PC-9 (cell line): ENCODE measurements at regions of chr2 and their contacts with region 1.

Region 1: DNA sequence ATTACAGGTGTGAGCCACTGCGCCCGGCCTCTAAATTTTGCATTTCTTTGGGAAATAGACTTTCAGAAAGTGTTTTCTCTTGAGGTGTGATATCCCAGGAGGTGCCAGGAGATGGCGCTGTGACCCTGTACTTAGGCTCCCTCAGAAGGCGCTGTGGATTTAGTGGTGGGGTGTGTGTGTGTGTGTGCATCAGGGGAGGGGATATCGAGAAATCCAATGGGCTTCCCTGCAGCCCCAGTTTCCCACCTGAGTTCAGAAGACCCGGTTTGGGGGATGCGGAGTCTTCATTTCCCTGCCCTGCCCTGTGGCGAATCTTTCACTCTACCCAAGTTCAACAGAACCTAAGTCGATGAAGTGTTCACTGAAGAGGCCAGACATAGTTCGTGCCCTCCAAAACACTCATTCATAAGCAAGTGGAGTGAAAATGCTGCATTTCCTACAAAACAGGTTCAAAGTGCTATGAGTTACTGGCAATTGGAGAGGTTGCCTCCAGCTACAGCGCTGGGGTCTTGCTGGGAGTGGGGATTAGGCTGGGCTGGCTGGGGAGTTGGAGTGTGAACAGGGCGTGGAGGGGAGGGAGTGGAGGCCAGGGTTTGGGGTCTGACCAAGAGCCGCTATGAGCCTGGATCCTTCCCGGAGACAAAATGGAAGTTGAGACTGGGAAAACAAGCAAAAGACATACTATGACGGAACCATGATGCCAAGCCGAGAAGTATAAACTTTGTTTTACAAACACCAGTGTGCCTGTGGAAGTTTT is 6.5 kb upstream of the WNT6 start:
- DNase-seq: peak in 1 of 2 experiments; percentile 37
- H3K4me3 ChIP-seq: no peak overlapping the region
- H3K27ac ChIP-seq: no peak overlapping the region
- H3K4me1 ChIP-seq: peaks cover 60% of the 10 kb centered on the region
- H3K27me3 ChIP-seq: no peaks in the 10 kb centered on the region
- CTCF ChIP-seq: peak; percentile 78

Region 2: GRCh38 chr2:218260742-218261437 is 592.2 kb before region 1 on chr2 and contains the start of gene GPBAR1:
- CTCF ChIA-PET with region 1: no interaction called
- POLR2A ChIA-PET with region 1: no interaction called
- intact Hi-C with region 1: no loop called
- DNase-seq: no peak
- H3K4me3 ChIP-seq: no peak within 1 kb of the TSS
- H3K27ac ChIP-seq: no peak within 1 kb of the TSS
- H3K4me1 ChIP-seq: no peaks in the 10 kb centered on the region
- H3K27me3 ChIP-seq: no peaks in the 10 kb centered on the region
- CTCF ChIP-seq: no peak
- total RNA-seq, gene GPBAR1: 0.20 and 0.22 TPM in 2 replicates

Region 3: GRCh38 chr2:218395797-218396687 is 457.0 kb before region 1 on chr2:
- CTCF ChIA-PET with region 1: no interaction called
- POLR2A ChIA-PET with region 1: no interaction called
- intact Hi-C with region 1: loop called (anchors 5 kb)
- DNase-seq: peak; percentile 83 to 95
- H3K4me3 ChIP-seq: peak overlapping the region; percentile 89
- H3K27ac ChIP-seq: peak overlapping the region; percentile 79
- H3K4me1 ChIP-seq: peaks cover 20% of the 10 kb centered on the region
- H3K27me3 ChIP-seq: no peaks in the 10 kb centered on the region
- CTCF ChIP-seq: peak; percentile 86

Region 4: GRCh38 chr2:218659258-218659987 is 193.7 kb before region 1 on chr2 and contains the starts of genes BCS1L and ZNF142:
- CTCF ChIA-PET with region 1: interaction called, 12 read pairs
- POLR2A ChIA-PET with region 1: no interaction called
- intact Hi-C with region 1: no loop called
- DNase-seq: peak; percentile 81 to 89
- H3K4me3 ChIP-seq: peak within 1 kb of the TSS; percentile 75
- H3K27ac ChIP-seq: peak within 1 kb of the TSS; percentile 42
- H3K4me1 ChIP-seq: peaks cover 5% of the 10 kb centered on the region; the same call in 1 of the 2 replicates
- H3K27me3 ChIP-seq: no peaks in the 10 kb centered on the region
- CTCF ChIP-seq: no peak
- total RNA-seq, gene BCS1L: 36.0 and 38.8 TPM in 2 replicates
- total RNA-seq, gene ZNF142: 23.1 and 23.7 TPM in 2 replicates

Region 5: DNA sequence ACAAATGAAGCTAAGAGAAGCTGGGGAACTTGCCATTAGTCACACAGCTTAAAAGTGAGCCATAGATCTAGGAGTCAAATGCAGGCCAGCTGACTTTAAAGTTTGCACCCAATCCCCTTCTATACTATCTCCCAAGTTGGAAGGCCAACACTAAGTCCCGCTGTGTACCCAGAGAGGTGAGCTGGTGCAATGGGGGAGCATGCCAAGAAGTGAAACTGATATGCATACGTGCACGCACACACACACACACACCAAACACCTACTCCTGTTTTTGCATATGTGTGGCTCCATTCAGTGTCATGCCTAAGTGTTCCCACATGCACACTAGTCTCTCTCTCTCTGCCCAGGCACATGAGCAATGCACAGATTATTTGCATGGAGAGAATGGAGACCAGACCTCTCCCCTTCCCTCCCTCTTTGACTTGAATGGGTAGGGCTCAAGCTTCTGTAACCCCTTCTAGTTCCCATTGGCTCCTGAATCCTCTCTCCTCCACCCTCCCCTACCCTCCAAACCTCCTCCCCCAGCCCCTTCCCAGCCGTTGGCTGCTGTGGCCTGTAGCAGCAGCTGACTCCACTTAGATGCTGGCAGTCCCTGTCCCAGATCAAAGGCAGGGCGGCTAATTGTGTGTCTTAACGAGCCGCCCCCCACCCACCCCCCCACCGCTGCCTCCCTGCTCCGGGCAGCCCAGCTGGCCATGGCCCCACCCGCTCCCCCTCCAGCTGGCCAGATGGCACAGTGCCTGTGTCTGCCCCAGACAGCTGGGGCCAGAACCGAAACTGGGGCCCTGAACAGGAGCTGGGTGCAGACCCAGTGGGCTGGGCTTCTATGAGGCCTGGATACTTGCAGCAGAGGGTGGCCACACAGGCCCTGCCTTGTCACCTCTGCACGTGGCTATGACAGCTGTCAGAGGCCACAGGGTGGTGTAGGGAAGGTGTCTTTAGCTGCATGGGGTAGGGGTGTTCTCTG is 33.2 kb after region 1 on chr2:
- CTCF ChIA-PET with region 1: no interaction called
- POLR2A ChIA-PET with region 1: no interaction called
- intact Hi-C with region 1: no loop called
- DNase-seq: no peak
- H3K4me3 ChIP-seq: no peak overlapping the region
- H3K27ac ChIP-seq: no peak overlapping the region
- H3K4me1 ChIP-seq: no peaks in the 10 kb centered on the region
- H3K27me3 ChIP-seq: no peaks in the 10 kb centered on the region
- CTCF ChIP-seq: no peak

Region 6: DNA sequence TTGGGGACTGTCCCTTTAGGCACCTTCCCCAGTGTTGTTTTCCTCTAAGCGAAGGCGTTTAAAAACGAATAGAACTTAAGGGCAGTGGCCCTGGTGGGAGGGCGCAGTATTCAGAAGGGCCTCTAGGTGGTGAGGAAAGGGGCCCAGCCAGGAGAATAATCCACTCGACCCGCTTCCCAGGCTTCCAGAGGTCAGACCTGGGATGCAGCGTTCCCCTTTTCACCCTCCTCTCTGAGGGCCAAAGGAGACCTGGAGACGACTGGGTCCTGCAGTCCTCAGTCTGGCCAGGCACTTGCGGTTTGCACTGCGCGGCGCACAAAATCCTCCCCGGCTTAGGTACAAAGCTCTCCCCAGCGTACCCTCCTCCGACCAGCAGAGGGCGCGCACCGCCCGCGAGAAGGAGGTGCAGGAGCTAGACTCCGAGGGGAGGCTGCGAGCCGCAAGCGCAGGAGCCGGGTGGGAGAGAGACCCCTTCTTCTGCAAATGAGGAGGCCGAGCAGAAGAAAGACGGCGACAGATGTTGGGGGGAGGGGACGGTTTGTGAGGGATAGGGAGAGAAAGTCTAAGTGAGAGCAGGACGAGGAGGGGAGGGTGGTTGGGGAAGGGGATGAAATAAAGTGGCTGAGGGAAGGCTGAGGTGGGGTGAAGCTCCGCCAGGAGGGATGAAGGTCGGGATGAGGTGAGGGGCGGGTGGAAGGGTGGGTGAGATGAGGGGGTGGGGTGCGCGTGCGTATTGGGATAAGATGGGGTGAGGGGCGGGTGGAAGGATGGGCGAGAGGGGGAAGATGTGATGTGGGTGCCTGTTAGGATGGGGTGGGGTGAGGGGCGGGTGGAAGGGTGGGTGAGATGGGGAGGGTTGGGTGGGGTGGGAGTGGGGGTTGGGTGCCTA is 127.0 kb after region 1 on chr2:
- CTCF ChIA-PET with region 1: no interaction called
- POLR2A ChIA-PET with region 1: no interaction called
- intact Hi-C with region 1: loop called (anchors 5 kb)
- DNase-seq: peak; percentile 53 to 79
- H3K4me3 ChIP-seq: peak overlapping the region; percentile 51; the same call in 1 of the 2 replicates
- H3K27ac ChIP-seq: no peak overlapping the region
- H3K4me1 ChIP-seq: no peaks in the 10 kb centered on the region
- H3K27me3 ChIP-seq: peaks cover 37% of the 10 kb centered on the region
- CTCF ChIP-seq: peak; percentile 97

Region 7: DNA sequence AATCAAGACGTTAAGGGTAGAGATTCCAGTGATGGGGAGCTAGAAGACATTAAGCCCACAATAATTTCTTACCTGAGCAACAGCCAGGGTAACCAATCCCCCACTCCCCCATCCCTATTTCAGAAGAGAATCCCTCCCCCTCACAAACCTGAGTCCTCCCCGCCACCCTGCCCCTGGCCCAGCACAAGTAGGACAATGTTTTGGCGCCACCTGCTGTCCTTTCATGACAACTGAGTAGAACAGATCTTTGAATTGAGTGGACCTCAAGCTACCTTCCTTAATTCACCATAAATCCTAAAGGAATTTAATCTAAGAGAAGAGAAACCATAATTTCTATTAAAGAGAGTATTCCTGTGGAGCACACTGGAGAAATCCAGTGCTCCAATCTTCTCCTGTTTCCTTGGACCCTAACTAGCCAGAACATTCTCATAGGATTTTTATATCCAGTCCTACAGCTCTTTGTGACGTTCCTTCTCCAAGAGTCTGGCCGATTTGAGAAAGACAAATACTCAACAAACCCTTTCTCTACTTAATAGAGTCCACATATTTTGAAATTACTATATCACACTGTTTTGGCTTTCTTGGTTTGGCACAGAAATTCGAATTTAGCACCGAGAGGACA is 266.4 kb after region 1 on chr2:
- CTCF ChIA-PET with region 1: interaction called, 3 read pairs
- POLR2A ChIA-PET with region 1: no interaction called
- intact Hi-C with region 1: loop called (anchors 5 kb)
- DNase-seq: peak in 1 of 2 experiments; percentile 46
- H3K4me3 ChIP-seq: no peak overlapping the region
- H3K27ac ChIP-seq: no peak overlapping the region
- H3K4me1 ChIP-seq: peaks cover 15% of the 10 kb centered on the region
- H3K27me3 ChIP-seq: no peaks in the 10 kb centered on the region
- CTCF ChIP-seq: peak; percentile 87